Activated CD8-positive, alpha-beta T cell treated with anti-CD3 and anti-CD28 coated beads for 36 hours (primary cell): ENCODE measurements at regions of chr1 and their contacts with region 1.

Region 1: DNA sequence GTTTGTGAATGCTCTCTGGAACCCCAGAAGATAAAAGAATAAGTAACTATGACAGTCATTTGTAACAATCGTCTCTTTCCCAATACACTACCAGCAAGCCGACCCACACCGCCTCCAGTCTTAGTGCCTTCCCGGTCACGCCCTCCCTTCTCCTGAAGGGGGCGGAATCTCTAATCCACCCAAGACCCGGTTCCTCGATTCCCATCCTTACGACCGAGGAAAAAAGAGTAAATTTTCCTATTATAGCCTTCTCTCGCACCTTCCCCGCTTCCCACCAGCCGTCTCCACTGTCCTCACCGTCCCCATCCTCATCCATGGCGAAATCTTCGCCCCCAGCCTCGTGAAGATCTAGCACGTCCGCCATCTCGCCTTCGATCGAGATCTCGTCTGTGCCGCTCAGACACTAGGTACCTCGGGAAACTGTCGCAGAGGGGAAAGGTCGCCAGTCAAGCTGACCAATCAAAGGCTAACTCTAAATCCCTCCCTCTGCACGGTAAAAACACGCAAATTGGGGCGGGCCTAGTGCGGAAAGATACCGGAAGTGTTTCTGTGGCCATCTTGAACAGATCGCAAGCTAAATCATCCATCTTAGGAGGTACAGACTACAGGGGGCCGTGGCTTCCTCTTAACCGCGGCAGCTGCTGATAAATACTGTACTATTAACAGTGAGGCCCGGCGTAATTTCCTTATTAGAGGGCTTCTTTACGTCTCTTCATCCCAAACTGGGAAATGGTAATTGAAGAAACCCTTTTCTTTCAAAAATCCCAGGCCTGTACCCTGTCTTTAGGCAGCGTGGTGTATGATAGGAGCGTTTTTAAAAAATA is at the start of gene RBM8A:
- DNase-seq: peak; percentile 97
- ATAC-seq: peak; percentile 98
- H3K4me3 Mint-ChIP-seq: no peak within 1 kb of the TSS
- H3K27ac Mint-ChIP-seq: no peak within 1 kb of the TSS
- H3K4me1 Mint-ChIP-seq: peaks cover 26% of the 10 kb centered on the region
- H3K27me3 Mint-ChIP-seq: no peaks in the 10 kb centered on the region
- CTCF ChIP-seq: peak; percentile 70
- total RNA-seq, gene RBM8A: 261 to 269 TPM

Region 2: DNA sequence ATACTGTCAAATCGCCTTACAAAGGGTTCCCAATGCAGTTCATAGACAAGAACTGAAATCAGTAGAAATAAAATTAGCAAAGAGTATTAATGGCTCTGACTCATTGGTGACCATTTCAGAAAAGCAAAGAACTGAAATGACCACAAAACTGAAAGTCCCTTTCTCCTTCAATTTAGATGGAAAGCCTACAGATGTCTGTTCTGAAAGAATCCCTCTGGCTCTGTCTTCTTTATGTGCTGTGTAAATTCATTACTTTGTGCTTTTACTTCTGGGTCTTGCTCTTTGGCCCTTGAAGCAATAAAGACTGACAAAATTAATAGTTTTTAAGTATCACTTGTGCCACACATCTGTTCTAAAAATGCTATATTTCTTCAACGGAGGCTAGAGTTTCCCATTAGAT is 382.2 kb before region 1 on chr1:
- CTCF ChIA-PET with region 1: no interaction called
- POLR2A ChIA-PET with region 1: no interaction called
- intact Hi-C with region 1: no loop called
- DNase-seq: no peak
- ATAC-seq: no peak
- H3K4me3 Mint-ChIP-seq: no peak overlapping the region
- H3K27ac Mint-ChIP-seq: no peak overlapping the region
- H3K4me1 Mint-ChIP-seq: no peaks in the 10 kb centered on the region
- H3K27me3 Mint-ChIP-seq: peaks cover 20% of the 10 kb centered on the region
- CTCF ChIP-seq: no peak

Region 3: DNA sequence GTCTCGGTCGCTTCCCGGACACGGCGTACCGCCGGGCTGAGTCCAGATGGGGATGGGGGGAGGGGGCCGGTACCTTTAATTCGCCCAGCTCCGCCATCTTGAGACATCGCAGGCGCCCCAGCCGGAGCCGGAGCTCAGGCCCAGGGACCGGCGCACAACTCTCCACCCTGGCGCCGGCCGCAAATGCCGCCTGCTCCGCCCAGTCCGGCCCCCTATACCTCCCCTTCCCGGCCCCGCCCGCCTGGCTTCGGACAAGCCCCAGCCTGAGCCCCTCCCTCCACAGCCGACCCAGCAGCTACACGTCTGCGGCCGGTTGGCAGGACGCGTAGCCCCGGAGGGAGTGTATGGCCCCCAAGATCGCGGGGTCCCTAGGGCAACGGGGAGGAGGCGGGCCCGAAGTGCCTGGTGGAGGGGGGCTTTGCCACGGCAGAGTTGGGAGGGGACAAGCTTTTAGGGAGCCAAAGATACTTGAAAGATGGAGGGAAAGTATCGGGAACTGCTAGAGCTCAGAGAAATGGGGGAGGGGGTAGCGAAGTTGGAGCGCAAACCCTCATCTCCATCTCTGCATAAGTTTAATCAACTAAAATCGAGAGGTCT is 68.3 kb before region 1 on chr1 and contains the start of gene PIAS3:
- CTCF ChIA-PET with region 1: interaction called, 3 read pairs
- POLR2A ChIA-PET with region 1: interaction called, 15 read pairs
- intact Hi-C with region 1: no loop called
- DNase-seq: peak; percentile 92
- ATAC-seq: peak; percentile 87
- H3K4me3 Mint-ChIP-seq: peak within 1 kb of the TSS; percentile 98
- H3K27ac Mint-ChIP-seq: peak within 1 kb of the TSS; percentile 86
- H3K4me1 Mint-ChIP-seq: peaks cover 14% of the 10 kb centered on the region
- H3K27me3 Mint-ChIP-seq: no peaks in the 10 kb centered on the region
- CTCF ChIP-seq: no peak
- total RNA-seq, gene PIAS3: 17.9 to 18.9 TPM

Region 4: DNA sequence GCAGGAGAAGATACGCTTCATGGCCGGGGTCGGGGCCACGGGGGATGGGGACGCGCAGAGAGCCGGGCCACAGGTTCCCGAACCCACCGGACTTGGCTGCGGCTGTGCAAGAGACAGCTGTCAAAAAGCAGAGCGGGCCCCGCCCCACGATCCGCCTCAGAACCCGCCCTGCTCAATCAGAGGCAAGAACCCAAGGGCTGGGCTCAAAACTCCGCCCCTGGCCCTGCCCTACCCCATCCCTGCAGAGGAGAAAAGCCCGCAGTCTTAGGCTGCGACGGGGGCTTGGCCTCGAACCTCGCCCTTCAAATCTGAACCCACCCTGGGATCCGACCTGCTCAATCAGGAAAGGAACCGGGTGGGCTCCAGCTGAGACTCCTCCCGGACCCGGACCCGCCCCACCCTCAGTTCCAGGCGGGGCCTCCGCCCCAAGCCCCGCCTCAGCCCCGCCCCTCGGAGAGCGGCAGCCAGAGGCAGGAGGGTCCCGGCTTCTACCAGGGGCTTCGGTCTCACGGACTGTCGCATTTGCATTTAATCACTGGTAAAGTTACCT is 41.5 kb before region 1 on chr1 and contains the start of gene ANKRD35:
- CTCF ChIA-PET with region 1: no interaction called
- POLR2A ChIA-PET with region 1: no interaction called
- intact Hi-C with region 1: no loop called
- DNase-seq: peak; percentile 95
- ATAC-seq: peak; percentile 99
- H3K4me3 Mint-ChIP-seq: peak within 1 kb of the TSS; percentile 74
- H3K27ac Mint-ChIP-seq: no peak within 1 kb of the TSS
- H3K4me1 Mint-ChIP-seq: peaks cover 17% of the 10 kb centered on the region
- H3K27me3 Mint-ChIP-seq: peaks cover 20% of the 10 kb centered on the region
- CTCF ChIP-seq: no peak
- total RNA-seq, gene ANKRD35: 0.54 to 0.59 TPM

Region 5: GRCh38 chr1:145901318-145902021 is 25.8 kb before region 1 on chr1:
- CTCF ChIA-PET with region 1: no interaction called
- POLR2A ChIA-PET with region 1: no interaction called
- intact Hi-C with region 1: no loop called
- DNase-seq: no peak
- ATAC-seq: no peak
- H3K4me3 Mint-ChIP-seq: no peak overlapping the region
- H3K27ac Mint-ChIP-seq: no peak overlapping the region
- H3K4me1 Mint-ChIP-seq: no peaks in the 10 kb centered on the region
- H3K27me3 Mint-ChIP-seq: no peaks in the 10 kb centered on the region
- CTCF ChIP-seq: no peak

Region 6: GRCh38 chr1:145942405-145942804 is 15.1 kb after region 1 on chr1:
- CTCF ChIA-PET with region 1: interaction called, 13 read pairs
- POLR2A ChIA-PET with region 1: interaction called, 10 read pairs
- intact Hi-C with region 1: no loop called
- DNase-seq: no peak
- ATAC-seq: no peak
- H3K4me3 Mint-ChIP-seq: no peak overlapping the region
- H3K27ac Mint-ChIP-seq: no peak overlapping the region
- H3K4me1 Mint-ChIP-seq: peaks cover 7% of the 10 kb centered on the region
- H3K27me3 Mint-ChIP-seq: no peaks in the 10 kb centered on the region
- CTCF ChIP-seq: no peak

Region 7: GRCh38 chr1:145963995-145964901 is 37.0 kb after region 1 on chr1 and contains the starts of genes ANKRD34A and POLR3GL:
- CTCF ChIA-PET with region 1: interaction called, 19 read pairs
- POLR2A ChIA-PET with region 1: interaction called, 160 read pairs
- intact Hi-C with region 1: loop called (anchors 5 kb)
- DNase-seq: peak; percentile 98
- ATAC-seq: peak; percentile 88
- H3K4me3 Mint-ChIP-seq: peak within 1 kb of the TSS; percentile 92
- H3K27ac Mint-ChIP-seq: peak within 1 kb of the TSS; percentile 91
- H3K4me1 Mint-ChIP-seq: peaks cover 30% of the 10 kb centered on the region
- H3K27me3 Mint-ChIP-seq: no peaks in the 10 kb centered on the region
- CTCF ChIP-seq: no peak
- total RNA-seq, gene ANKRD34A: 6.6 to 7.7 TPM
- total RNA-seq, gene POLR3GL: 22.3 to 23.3 TPM

Region 8: DNA sequence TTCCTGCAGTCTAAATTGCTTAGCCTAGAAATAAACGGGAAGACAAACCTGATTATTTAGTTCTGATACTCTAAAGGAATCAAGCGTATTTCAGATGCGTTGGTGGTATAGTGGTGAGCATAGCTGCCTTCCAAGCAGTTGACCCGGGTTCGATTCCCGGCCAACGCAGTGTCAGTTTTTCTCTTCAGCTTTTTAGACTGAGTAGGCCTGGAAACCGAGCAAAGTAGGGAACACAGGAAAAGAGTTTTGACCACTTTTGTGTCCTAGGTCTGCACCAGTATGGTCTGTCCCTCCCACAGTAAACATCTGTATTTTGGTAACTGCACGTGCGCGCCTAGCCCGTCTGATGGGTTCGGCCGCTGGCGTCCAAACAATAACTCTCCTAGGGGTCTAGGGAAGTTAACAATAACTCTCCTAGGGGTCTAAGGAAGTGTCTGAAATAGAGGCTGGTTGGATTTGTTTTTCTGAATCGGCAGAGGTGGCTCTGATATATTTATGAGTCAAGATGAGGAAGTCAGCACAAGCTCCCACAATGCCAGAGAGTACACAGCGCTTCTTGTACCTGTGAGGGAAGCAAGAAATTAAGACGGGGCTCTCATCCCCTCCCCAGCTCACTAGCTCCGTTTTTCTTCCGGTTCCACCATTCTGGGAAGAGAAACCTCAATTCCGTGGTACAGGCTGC is 109.8 kb after region 1 on chr1:
- CTCF ChIA-PET with region 1: interaction called, 5 read pairs
- POLR2A ChIA-PET with region 1: interaction called, 15 read pairs
- intact Hi-C with region 1: no loop called
- DNase-seq: peak; percentile 92
- ATAC-seq: peak; percentile 35
- H3K4me3 Mint-ChIP-seq: peak overlapping the region; percentile 92
- H3K27ac Mint-ChIP-seq: peak overlapping the region; percentile 98
- H3K4me1 Mint-ChIP-seq: peaks cover 25% of the 10 kb centered on the region
- H3K27me3 Mint-ChIP-seq: peaks cover 7% of the 10 kb centered on the region
- CTCF ChIP-seq: no peak